Cardiac septum (tissue), 1 donor: ENCODE measurements at regions of chr3 and their contacts with region 1.

Region 1: DNA sequence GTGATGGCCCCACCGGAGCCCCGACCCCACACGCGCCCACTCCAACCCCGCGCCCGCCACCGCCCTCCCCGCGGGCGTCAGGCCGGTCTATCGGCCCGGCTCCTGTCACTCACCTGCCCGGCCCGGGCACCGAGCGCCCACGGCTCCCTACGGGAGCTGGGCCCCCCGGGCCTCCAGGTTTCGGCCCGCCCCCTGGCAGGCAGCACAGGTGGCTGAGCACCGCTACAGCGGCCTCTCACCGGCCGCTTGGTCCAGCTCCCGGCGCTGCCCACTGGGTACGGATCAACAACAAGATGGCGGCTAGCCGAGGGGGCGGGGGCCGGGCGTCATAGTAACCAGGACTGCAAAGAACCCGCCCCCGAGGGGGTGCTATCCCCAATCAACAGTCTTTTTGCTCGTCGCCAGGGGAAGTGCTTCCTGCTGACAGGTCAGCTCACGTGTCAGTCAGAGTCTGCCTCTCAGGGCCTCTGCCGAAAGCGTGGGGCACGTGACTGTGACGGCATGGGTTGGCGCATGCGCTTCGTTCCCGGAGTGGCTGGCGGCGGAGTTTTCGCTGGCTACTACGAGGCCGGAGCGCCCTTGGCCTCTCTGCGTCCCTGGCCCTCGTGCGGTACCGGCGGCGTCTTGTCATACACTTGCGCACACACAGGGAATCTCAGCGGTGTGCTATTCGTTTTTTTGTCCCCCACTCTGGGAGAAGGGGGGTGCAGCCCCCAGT is at the start of gene IP6K1:
- DNase-seq: peak; percentile 100
- total RNA-seq, gene IP6K1: 19.7 TPM

Region 2: DNA sequence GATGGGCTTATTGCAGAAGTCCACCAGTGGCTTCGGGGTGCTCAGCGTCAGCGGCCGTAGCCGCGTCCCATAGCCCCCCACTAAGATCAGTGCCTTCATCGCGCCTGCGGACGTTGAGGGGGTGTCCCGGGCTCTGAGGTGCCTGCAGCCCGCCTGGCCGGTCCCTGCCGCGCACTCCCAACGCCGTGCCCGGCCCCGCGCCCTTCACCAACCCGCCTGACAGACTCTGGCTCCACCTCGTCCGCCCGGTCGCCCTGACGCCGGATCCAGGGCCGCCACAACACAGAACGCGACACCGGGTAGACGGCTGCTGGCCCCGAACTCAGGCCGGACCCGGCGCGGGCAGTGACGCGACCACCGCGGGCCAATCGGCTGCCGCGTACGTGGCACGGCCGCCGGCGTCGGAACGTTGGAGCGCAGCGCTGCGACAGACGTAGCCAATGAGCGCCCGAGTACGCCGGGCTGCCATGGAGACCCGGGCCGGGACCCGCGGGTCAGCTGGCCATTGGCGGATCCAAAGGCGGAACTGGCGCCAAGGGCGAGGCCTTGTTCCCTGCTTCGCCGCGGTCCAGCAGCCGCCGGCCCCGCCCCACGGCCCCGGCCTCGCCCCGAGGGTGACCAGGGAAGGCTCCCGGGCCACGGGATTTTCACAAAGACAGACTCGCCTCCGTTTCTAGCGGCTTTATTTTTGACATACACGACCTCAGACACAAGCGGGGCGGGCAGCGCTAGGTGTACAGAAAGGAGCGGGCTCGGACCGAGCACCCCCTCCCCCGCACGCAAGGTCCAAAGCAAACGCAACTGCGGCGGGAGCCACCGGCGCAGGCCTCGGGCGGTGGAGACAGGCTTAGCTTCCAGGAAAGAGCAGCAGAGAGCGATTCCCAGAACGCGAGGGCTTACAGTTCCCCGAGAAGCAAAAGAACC is 62.5 kb before region 1 on chr3 and contains the start of gene GMPPB:
- intact Hi-C with region 1: loop called (anchors 5 kb)
- DNase-seq: peak; percentile 99
- total RNA-seq, gene GMPPB: 19.5 TPM